GM12878 (cell line): ENCODE measurements at regions of chr14 and their contacts with region 1.

Region 1: DNA sequence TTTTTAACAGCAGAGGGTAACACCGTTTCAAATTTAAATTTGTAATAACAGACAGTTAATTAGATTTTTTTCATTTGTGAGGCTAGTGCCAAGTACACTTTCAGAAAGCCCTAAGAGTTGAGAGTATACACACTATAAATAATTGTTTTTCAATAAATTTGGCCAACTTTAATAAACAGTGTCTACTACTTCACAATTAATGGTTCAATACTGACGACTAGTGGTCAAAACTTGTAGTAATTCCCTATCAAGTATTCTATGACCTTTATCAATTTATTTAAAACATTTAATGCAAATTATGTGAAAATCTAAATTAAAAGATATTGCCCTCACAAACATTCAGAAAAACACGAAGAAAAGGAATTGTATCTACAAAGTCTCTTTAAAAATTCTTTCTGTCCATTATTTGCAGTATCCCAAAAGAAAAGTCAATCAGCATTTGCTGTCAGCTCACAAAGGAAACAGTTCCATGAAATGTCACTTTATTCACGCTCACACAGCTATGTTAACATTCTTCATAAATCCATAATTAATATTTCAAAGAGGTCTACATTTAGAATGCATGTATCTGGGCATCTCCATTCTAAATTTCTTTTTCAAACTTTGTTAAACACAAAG is 91.2 kb downstream of the CEP128 start:
- DNase-seq: no peak
- ATAC-seq: peak; percentile 73
- H3K4me3 ChIP-seq: no peak overlapping the region
- H3K27ac ChIP-seq: no peak overlapping the region
- H3K4me1 ChIP-seq: no peaks in the 10 kb centered on the region
- H3K27me3 ChIP-seq: no peaks in the 10 kb centered on the region
- CTCF ChIP-seq: peak; percentile 30 to 60 (median 33); a peak in 2 of 6 replicates
- EP300 ChIP-seq: no peak
- POLR2A ChIP-seq: no peak
- RAD21 ChIP-seq: peak; percentile 71

Region 2: DNA sequence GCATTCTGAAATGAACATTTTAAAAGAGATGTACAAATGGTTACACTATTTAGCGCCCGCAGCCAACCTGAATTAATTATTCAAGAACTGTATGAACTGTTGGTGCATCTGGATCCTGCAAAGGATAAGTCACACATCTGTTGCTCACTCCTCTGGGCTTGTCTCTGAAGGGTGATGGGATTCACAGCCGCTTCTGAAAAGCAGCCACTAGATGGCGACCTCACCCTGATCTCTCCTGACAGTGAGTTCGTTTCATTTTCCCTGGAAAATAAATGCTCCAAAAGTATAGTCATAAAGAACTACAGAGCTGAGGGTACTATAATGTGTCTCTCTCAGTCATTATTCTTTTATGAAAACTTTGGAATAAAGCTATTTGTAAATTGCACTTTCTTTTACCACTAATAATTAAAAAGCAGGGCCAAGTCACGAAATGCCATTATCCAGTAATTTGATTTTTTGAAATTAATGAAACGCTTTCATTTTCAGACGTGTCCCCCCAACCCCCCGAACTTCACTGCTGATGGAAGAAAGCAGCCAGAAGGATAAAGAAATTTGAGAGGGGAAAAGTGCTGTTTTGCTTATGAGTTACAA is 1890.5 kb before region 1 on chr14:
- CTCF ChIA-PET with region 1: no interaction called
- POLR2A ChIA-PET with region 1: no interaction called
- RAD21 ChIA-PET with region 1: interaction called, 3 read pairs
- SMC1A ChIA-PET with region 1: no interaction called
- in situ Hi-C with region 1: loop called (anchors 10 kb)
- intact Hi-C with region 1: no loop called
- DNase-seq: no peak
- ATAC-seq: peak; percentile 87
- H3K4me3 ChIP-seq: no peak overlapping the region
- H3K27ac ChIP-seq: no peak overlapping the region
- H3K4me1 ChIP-seq: no peaks in the 10 kb centered on the region
- H3K27me3 ChIP-seq: no peaks in the 10 kb centered on the region
- CTCF ChIP-seq: peak; percentile 70 to 82 (median 80)
- EP300 ChIP-seq: no peak
- POLR2A ChIP-seq: no peak
- RAD21 ChIP-seq: peak; percentile 49

Region 3: DNA sequence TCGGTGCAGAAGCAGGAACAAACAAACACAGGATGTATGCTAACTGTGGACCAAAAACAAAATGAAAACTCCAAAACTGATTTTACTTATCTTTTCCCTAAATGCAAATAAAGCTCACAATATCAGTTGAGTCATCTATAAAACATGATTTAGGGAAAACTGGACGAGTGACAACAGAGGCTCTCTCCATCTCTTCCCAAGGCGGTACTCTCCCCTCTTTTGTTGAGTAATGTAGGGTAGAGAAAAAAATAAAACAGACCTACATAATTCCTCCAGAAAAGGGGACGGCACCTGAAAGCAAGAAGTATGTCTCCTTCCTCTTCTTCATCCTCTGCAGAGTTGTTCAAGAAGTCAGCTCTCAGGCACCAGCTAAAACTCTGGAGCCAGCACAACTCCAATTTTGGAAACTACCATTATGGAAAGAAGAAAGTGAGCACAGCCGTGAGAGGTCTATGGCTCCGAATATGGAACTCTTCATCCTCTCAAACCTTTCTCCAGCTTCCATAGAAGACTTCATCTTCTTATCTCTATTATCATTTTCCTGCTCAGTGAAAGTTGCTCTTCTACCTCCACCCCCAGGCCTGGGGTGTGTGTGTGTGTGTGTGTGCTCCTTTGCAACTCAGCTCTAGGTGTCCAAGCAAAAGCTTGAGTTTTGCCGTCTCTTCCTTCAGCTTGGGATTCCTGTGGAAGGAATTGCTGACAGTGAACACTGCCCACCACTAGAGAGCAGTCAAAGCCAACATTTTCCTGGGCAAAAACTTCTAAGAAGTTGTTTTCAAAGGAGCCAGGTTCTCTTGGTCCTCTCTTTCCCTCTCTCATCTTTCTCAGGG is 794.4 kb before region 1 on chr14:
- CTCF ChIA-PET with region 1: interaction called, 9 read pairs
- POLR2A ChIA-PET with region 1: no interaction called
- RAD21 ChIA-PET with region 1: interaction called, 4 read pairs
- SMC1A ChIA-PET with region 1: interaction called, 10 read pairs
- in situ Hi-C with region 1: loop called (anchors 10 kb)
- intact Hi-C with region 1: loop called (anchors 2 kb)
- DNase-seq: no peak
- ATAC-seq: peak; percentile 24; the same call in 2 of the 3 replicates
- H3K4me3 ChIP-seq: no peak overlapping the region
- H3K27ac ChIP-seq: no peak overlapping the region
- H3K4me1 ChIP-seq: no peaks in the 10 kb centered on the region
- H3K27me3 ChIP-seq: no peaks in the 10 kb centered on the region
- CTCF ChIP-seq: peak; percentile 51 to 63 (median 52); a peak in 5 of 6 replicates
- EP300 ChIP-seq: no peak
- POLR2A ChIP-seq: no peak
- RAD21 ChIP-seq: peak; percentile 75

Region 4: GRCh38 chr14:80213599-80213998 is 636.7 kb before region 1 on chr14:
- CTCF ChIA-PET with region 1: interaction called, 47 read pairs
- POLR2A ChIA-PET with region 1: no interaction called
- RAD21 ChIA-PET with region 1: interaction called, 17 read pairs
- SMC1A ChIA-PET with region 1: interaction called, 21 read pairs
- in situ Hi-C with region 1: no loop called
- intact Hi-C with region 1: loop called (anchors 2 kb)
- DNase-seq: no peak
- ATAC-seq: peak; percentile 91
- H3K4me3 ChIP-seq: no peak overlapping the region
- H3K27ac ChIP-seq: no peak overlapping the region
- H3K4me1 ChIP-seq: no peaks in the 10 kb centered on the region
- H3K27me3 ChIP-seq: no peaks in the 10 kb centered on the region; a peak in 1 of 4 replicates
- CTCF ChIP-seq: peak; percentile 44 to 64 (median 48); a peak in 5 of 6 replicates
- EP300 ChIP-seq: no peak
- POLR2A ChIP-seq: no peak
- RAD21 ChIP-seq: peak; percentile 63

Region 5: GRCh38 chr14:80323038-80323691 is 527.1 kb before region 1 on chr14:
- CTCF ChIA-PET with region 1: no interaction called
- POLR2A ChIA-PET with region 1: no interaction called
- RAD21 ChIA-PET with region 1: no interaction called
- SMC1A ChIA-PET with region 1: no interaction called
- in situ Hi-C with region 1: no loop called
- intact Hi-C with region 1: no loop called
- DNase-seq: no peak
- ATAC-seq: no peak
- H3K4me3 ChIP-seq: no peak overlapping the region
- H3K27ac ChIP-seq: no peak overlapping the region
- H3K4me1 ChIP-seq: no peaks in the 10 kb centered on the region
- H3K27me3 ChIP-seq: no peaks in the 10 kb centered on the region
- CTCF ChIP-seq: no peak
- EP300 ChIP-seq: no peak
- POLR2A ChIP-seq: no peak
- RAD21 ChIP-seq: no peak

Region 6: GRCh38 chr14:80664576-80664975 is 185.7 kb before region 1 on chr14:
- CTCF ChIA-PET with region 1: no interaction called
- POLR2A ChIA-PET with region 1: no interaction called
- RAD21 ChIA-PET with region 1: no interaction called
- SMC1A ChIA-PET with region 1: no interaction called
- in situ Hi-C with region 1: no loop called
- intact Hi-C with region 1: no loop called
- DNase-seq: no peak
- ATAC-seq: no peak
- H3K4me3 ChIP-seq: no peak overlapping the region
- H3K27ac ChIP-seq: no peak overlapping the region
- H3K4me1 ChIP-seq: no peaks in the 10 kb centered on the region
- H3K27me3 ChIP-seq: no peaks in the 10 kb centered on the region
- CTCF ChIP-seq: no peak
- EP300 ChIP-seq: no peak
- POLR2A ChIP-seq: no peak
- RAD21 ChIP-seq: no peak

Region 7: DNA sequence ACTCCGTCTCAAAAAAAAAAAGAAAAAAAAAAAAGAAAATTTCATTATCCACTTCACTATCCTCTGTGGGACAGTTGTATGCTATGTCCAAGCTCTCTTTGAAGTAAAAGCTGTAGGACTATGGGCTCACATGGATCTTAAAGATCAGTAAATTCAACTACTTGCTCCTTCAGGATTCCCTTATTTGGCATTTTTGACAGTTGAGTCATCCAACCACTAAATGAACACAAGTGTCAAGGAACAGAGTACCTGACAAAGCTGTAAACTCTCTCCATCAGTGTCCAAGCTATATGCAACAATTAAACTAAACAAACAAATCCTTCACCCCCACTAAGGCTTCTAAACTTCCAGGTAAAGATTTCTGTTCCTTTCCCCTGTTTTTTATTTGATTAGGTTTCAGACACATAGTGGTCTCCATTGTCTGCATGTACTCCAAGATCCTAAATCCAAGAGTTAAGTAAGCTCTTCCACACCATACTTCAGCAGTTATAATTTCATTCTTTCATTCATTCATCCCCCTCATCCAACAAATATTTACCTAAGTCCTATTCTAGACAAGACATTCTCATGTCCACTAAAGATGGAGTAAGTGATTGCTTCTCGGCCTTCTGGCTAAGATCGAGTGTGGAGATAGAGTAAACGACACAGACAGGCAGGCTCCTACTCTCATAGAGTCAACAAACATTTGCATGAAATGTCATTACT is 85.7 kb before region 1 on chr14:
- CTCF ChIA-PET with region 1: no interaction called
- POLR2A ChIA-PET with region 1: no interaction called
- RAD21 ChIA-PET with region 1: no interaction called
- SMC1A ChIA-PET with region 1: no interaction called
- in situ Hi-C with region 1: no loop called
- intact Hi-C with region 1: no loop called
- DNase-seq: no peak
- ATAC-seq: no peak
- H3K4me3 ChIP-seq: no peak overlapping the region
- H3K27ac ChIP-seq: no peak overlapping the region
- H3K4me1 ChIP-seq: no peaks in the 10 kb centered on the region
- H3K27me3 ChIP-seq: no peaks in the 10 kb centered on the region
- CTCF ChIP-seq: no peak
- EP300 ChIP-seq: no peak
- POLR2A ChIP-seq: no peak
- RAD21 ChIP-seq: no peak

Region 8: GRCh38 chr14:80839743-80840142 is 10.6 kb before region 1 on chr14:
- CTCF ChIA-PET with region 1: interaction called, 7 read pairs
- POLR2A ChIA-PET with region 1: no interaction called
- RAD21 ChIA-PET with region 1: no interaction called
- SMC1A ChIA-PET with region 1: interaction called, 14 read pairs
- in situ Hi-C with region 1: no loop called
- intact Hi-C with region 1: no loop called
- DNase-seq: no peak
- ATAC-seq: no peak
- H3K4me3 ChIP-seq: no peak overlapping the region
- H3K27ac ChIP-seq: no peak overlapping the region
- H3K4me1 ChIP-seq: no peaks in the 10 kb centered on the region
- H3K27me3 ChIP-seq: no peaks in the 10 kb centered on the region
- CTCF ChIP-seq: no peak
- EP300 ChIP-seq: no peak
- POLR2A ChIP-seq: no peak
- RAD21 ChIP-seq: no peak